CD4-positive, alpha-beta T cell (primary cell): ENCODE measurements at regions of chr1 and their contacts with region 1.

Region 1: GRCh38 chr1:247373721-247374141 is 42.1 kb upstream of the ZNF496 start:
- DNase-seq: peak; percentile 25 to 77 (median 50)
- ATAC-seq: peak; percentile 87
- H3K4me3 ChIP-seq: peak overlapping the region; percentile 14
- H3K4me3 Mint-ChIP-seq: no peak overlapping the region
- H3K27ac ChIP-seq: no peak overlapping the region
- H3K27ac Mint-ChIP-seq: no peak overlapping the region
- H3K4me1 ChIP-seq: peaks cover 7% of the 10 kb centered on the region
- H3K4me1 Mint-ChIP-seq: peaks cover 9% of the 10 kb centered on the region
- H3K27me3 ChIP-seq: no peaks in the 10 kb centered on the region
- H3K27me3 Mint-ChIP-seq: peaks cover 16% of the 10 kb centered on the region
- CTCF ChIP-seq: peak; percentile 64

Region 2: DNA sequence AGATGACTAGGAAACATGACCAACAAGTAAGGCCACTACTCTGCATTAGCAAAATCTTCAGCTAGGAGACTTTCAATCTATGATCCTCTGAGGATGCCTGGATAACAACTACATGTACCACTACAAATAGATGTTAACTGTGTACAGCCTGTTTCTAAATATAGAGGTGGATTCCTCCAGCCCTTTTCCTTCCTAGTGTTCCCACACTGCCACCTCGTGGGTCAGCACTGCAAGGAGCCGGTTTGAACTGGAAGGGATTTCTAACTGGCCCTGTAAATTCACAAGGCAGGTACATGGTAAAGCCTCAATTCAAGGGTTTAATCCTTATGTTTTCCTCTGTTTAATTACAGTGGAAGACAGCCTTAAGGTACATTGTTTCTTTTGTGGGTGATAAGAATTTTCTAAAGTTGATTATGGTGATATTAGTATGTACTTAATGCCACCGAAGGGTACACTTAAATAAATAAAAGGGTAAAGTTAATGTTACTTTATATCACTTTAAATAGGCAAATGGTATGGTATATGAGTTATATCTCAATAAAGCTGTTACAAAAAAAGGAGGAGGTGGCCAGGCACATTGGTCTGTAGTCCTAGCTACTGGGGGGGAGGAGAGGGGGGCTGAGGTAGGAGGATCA is 881.0 kb before region 1 on chr1:
- CTCF ChIA-PET with region 1: no interaction called
- POLR2A ChIA-PET with region 1: no interaction called
- intact Hi-C with region 1: no loop called
- DNase-seq: peak in 7 of 14 experiments; percentile 12 to 37 (median 20)
- ATAC-seq: no peak
- H3K4me3 ChIP-seq: no peak overlapping the region
- H3K4me3 Mint-ChIP-seq: no peak overlapping the region
- H3K27ac ChIP-seq: no peak overlapping the region
- H3K27ac Mint-ChIP-seq: no peak overlapping the region
- H3K4me1 ChIP-seq: no peaks in the 10 kb centered on the region
- H3K4me1 Mint-ChIP-seq: peaks cover 14% of the 10 kb centered on the region
- H3K27me3 ChIP-seq: no peaks in the 10 kb centered on the region
- H3K27me3 Mint-ChIP-seq: no peaks in the 10 kb centered on the region
- CTCF ChIP-seq: peak; percentile 52

Region 3: GRCh38 chr1:246971090-246971721 is 402.5 kb before region 1 on chr1:
- CTCF ChIA-PET with region 1: no interaction called
- POLR2A ChIA-PET with region 1: no interaction called
- intact Hi-C with region 1: no loop called
- DNase-seq: peak in 12 of 14 experiments; percentile 4 to 63 (median 21)
- ATAC-seq: no peak
- H3K4me3 ChIP-seq: no peak overlapping the region
- H3K4me3 Mint-ChIP-seq: no peak overlapping the region
- H3K27ac ChIP-seq: no peak overlapping the region
- H3K27ac Mint-ChIP-seq: no peak overlapping the region
- H3K4me1 ChIP-seq: no peaks in the 10 kb centered on the region
- H3K4me1 Mint-ChIP-seq: no peaks in the 10 kb centered on the region
- H3K27me3 ChIP-seq: no peaks in the 10 kb centered on the region
- H3K27me3 Mint-ChIP-seq: peaks cover 5% of the 10 kb centered on the region
- CTCF ChIP-seq: peak; percentile 78

Region 4: DNA sequence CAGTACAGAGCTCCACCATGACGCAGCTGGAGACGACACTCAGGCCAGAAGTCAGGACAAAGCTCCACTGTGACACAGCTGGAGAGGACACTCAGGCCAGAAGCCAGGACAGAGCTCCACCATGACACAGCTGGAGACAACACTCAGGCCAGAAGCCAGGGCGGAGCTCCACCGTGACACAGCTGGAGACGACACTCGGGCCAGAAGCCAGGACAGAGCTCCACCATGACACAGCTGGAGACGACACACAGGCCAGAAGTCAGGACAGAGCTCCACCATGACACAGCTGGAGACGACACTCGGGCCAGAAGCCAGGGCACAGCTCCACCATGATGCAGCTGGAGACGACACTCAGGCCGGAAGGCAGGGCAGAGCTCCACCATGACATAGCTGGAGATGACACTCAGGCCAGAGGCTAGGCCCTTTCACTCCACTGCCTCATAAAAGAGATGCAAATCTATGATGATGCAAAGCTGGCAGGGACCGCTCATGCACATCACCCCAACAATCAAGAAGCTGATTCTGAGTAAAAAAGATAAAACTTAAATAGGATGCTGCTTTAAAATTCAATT is 97.8 kb after region 1 on chr1:
- CTCF ChIA-PET with region 1: no interaction called
- POLR2A ChIA-PET with region 1: no interaction called
- intact Hi-C with region 1: no loop called
- DNase-seq: no peak
- ATAC-seq: no peak
- H3K4me3 ChIP-seq: no peak overlapping the region
- H3K4me3 Mint-ChIP-seq: no peak overlapping the region
- H3K27ac ChIP-seq: no peak overlapping the region
- H3K27ac Mint-ChIP-seq: no peak overlapping the region
- H3K4me1 ChIP-seq: no peaks in the 10 kb centered on the region
- H3K4me1 Mint-ChIP-seq: no peaks in the 10 kb centered on the region
- H3K27me3 ChIP-seq: no peaks in the 10 kb centered on the region
- H3K27me3 Mint-ChIP-seq: no peaks in the 10 kb centered on the region
- CTCF ChIP-seq: no peak

Region 5: GRCh38 chr1:247487057-247487456 is 113.3 kb after region 1 on chr1:
- CTCF ChIA-PET with region 1: interaction called, 34 read pairs
- POLR2A ChIA-PET with region 1: interaction called, 11 read pairs
- intact Hi-C with region 1: loop called (anchors 1 kb)
- DNase-seq: peak in 10 of 14 experiments; percentile 2 to 76 (median 14)
- ATAC-seq: peak; percentile 77
- H3K4me3 ChIP-seq: no peak overlapping the region
- H3K4me3 Mint-ChIP-seq: no peak overlapping the region
- H3K27ac ChIP-seq: no peak overlapping the region
- H3K27ac Mint-ChIP-seq: no peak overlapping the region
- H3K4me1 ChIP-seq: no peaks in the 10 kb centered on the region
- H3K4me1 Mint-ChIP-seq: no peaks in the 10 kb centered on the region
- H3K27me3 ChIP-seq: peaks cover 0 to 5% of the 10 kb centered on the region in 2 experiments
- H3K27me3 Mint-ChIP-seq: peaks cover 10% of the 10 kb centered on the region
- CTCF ChIP-seq: peak; percentile 76